Activated CD8-positive, alpha-beta memory T cell treated with anti-CD3 and anti-CD28 coated beads, Interleukin-2, amount 10 ng/mL, durations not matched to agents 7 days and 5 days (primary cell): ENCODE measurements at regions of chr14 and their contacts with region 1.

Region 1: DNA sequence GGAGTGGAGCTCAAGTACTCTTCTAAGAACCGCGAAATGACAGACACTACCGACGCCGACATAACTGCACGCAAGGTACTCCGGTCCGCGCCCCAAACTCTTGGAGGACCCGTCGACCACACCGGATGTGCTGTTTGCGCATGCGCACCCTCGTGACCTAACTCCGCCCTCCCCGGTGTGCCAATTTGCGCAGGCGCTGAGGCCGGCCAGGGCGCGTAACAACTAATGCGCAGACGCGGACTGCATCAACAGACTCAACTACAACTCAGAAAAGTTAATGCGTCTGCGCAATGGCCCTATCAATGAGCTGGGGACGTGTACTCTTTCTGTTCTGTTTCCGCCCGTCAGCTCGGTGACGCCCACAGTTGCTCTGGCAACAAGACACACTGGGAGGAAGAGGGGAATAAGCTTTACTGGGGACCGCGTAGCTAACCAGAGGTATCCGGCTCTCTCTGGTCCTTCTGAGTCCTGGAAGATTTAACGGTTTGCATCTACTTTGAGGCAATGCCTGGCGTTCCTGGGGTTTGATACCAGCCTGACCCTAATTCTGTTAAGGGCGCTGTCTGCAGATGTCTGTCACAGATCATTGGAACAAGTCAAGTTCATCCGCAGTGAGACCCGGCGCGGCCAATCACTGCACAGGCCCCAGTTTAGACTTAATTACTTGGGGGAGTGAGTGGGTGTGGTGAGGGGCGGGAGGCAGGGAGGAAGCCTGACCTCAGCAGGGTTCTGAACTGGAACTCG is at the start of gene DAD1:
- DNase-seq: peak; percentile 100
- ATAC-seq: peak; percentile 90
- H3K4me3 Mint-ChIP-seq: peak within 1 kb of the TSS; percentile 86
- H3K27ac Mint-ChIP-seq: peak within 1 kb of the TSS; percentile 100
- H3K4me1 Mint-ChIP-seq: peaks cover 56% of the 10 kb centered on the region
- H3K27me3 Mint-ChIP-seq: peaks cover 2% of the 10 kb centered on the region
- total RNA-seq, gene DAD1: 115 to 185 TPM

Region 2: DNA sequence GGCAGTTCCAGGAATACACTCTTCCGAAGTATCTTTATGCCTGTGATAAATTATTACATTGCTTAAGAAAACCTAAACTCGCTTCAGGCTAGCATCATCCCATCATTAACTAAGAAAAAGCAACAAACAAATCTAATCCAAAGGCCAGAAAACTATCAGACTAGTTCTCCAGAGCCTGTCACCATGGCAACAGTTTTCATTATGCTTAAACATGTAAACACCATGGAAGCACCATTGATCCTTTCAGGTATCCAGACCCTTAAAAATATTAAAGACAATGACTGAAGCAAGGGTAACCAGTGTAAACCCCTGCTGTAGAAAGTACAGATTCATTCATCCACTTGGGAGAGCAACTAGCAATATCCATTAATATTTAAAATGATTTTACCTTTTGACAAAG is 10.0 kb before region 1 on chr14:
- CTCF ChIA-PET with region 1: interaction called, 172 read pairs
- DNase-seq: no peak
- ATAC-seq: no peak
- H3K4me3 Mint-ChIP-seq: no peak overlapping the region
- H3K27ac Mint-ChIP-seq: peak overlapping the region; percentile 1
- H3K4me1 Mint-ChIP-seq: peaks cover 56% of the 10 kb centered on the region
- H3K27me3 Mint-ChIP-seq: no peaks in the 10 kb centered on the region